ENCODE measurements at regions of chr1 and their contacts with region 1.

Region 1: GRCh38 chr1:25338188-25338981 is at the start of gene TMEM50A:
- DNase-seq: peak; percentile 79
- ATAC-seq: peak; percentile 76
- H3K4me3 ChIP-seq: peak within 1 kb of the TSS; percentile 100
- H3K27ac ChIP-seq: peak within 1 kb of the TSS; percentile 78
- H3K4me1 ChIP-seq: peaks cover 13% of the 10 kb centered on the region
- H3K27me3 ChIP-seq: no peaks in the 10 kb centered on the region
- CTCF ChIP-seq: no peak
- total RNA-seq, gene TMEM50A: 70.2 and 90.5 TPM in 2 replicates

Region 2: GRCh38 chr1:25247024-25247828 is 91.2 kb before region 1 on chr1 and contains the start of gene RSRP1:
- CTCF ChIA-PET with region 1: no interaction called
- POLR2A ChIA-PET with region 1: no interaction called
- intact Hi-C with region 1: loop called (anchors 5 kb)
- DNase-seq: peak; percentile 97
- ATAC-seq: peak; percentile 85
- H3K4me3 ChIP-seq: peak within 1 kb of the TSS; percentile 99
- H3K27ac ChIP-seq: peak within 1 kb of the TSS; percentile 76
- H3K4me1 ChIP-seq: peaks cover 21% of the 10 kb centered on the region
- H3K27me3 ChIP-seq: no peaks in the 10 kb centered on the region
- CTCF ChIP-seq: no peak
- total RNA-seq, gene RSRP1: 46.8 and 49.4 TPM in 2 replicates

Region 3: GRCh38 chr1:25430666-25431505 is 92.5 kb after region 1 on chr1 and contains the start of gene MACO1:
- CTCF ChIA-PET with region 1: no interaction called
- POLR2A ChIA-PET with region 1: no interaction called
- intact Hi-C with region 1: loop called (anchors 10 kb)
- DNase-seq: peak; percentile 97
- ATAC-seq: peak; percentile 89
- H3K4me3 ChIP-seq: peak within 1 kb of the TSS; percentile 92
- H3K27ac ChIP-seq: peak within 1 kb of the TSS; percentile 63
- H3K4me1 ChIP-seq: peaks cover 34% of the 10 kb centered on the region
- H3K27me3 ChIP-seq: no peaks in the 10 kb centered on the region
- CTCF ChIP-seq: no peak
- total RNA-seq, gene MACO1: 13.6 and 14.0 TPM in 2 replicates

Region 4: DNA sequence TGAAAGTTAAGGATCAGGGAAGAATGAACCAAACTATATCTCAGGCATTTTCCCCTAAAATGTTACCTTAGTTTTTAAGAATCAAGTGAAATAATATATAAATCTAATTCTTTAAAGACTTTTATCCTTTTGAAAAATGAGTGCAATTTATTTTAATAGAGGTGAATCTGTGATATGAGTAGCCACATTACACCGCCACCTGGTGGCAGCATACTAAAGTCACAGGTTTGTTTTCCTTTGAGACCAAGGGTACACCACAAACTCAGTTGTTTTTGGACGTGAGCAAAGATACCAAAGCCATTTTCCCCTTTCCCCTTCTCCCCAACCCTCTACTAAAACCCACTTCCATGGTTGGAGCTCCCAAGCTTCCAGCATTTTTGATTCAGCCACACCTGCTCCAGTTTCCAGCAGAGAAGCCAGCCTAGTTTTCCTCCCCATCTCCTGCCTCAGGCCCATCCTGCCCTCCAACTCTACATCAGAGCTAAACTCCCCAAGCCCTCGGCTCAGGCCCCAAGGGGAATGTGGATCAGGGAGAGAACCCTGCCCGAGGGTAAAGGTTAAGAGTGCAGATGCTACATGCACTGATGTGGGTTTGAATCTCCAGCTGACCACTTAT is 182.2 kb after region 1 on chr1:
- CTCF ChIA-PET with region 1: no interaction called
- POLR2A ChIA-PET with region 1: no interaction called
- intact Hi-C with region 1: loop called (anchors 5 kb)
- DNase-seq: peak; percentile 70
- ATAC-seq: peak; percentile 65; the same call in 1 of the 2 replicates
- H3K4me3 ChIP-seq: no peak overlapping the region
- H3K27ac ChIP-seq: no peak overlapping the region
- H3K4me1 ChIP-seq: no peaks in the 10 kb centered on the region
- H3K27me3 ChIP-seq: no peaks in the 10 kb centered on the region
- CTCF ChIP-seq: peak; percentile 83

Measured in PC-3 (cell line).